GM10248 (cell line): ENCODE measurements at regions of chr6 and their contacts with region 1.

Region 1: DNA sequence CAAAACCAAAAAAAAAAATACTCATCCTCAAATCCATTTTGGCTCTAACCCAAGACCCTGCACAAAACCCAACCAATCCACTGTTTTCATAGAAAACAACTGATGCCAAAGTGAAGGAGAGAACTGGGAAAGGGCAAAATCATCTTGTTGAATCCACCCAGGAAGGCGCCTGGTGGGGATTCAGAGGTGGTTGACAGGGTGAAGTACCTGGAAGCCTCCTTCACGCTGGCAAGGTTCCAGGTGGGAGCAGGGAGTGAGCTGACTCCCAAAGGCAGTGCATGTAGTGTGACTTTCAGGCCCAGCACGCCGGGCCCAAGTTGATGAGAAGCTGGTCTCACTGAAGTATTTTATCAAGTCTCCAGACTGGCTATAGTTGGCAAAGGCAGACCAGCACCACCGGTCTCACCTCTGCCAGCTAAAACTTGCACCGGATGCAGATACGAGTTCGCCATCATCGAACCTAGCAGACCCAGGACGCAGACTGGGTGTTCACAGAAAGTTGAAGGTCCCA is 16.5 kb downstream of the PPP1R10 start:
- DNase-seq: no peak
- CTCF ChIP-seq: no peak

Region 2: DNA sequence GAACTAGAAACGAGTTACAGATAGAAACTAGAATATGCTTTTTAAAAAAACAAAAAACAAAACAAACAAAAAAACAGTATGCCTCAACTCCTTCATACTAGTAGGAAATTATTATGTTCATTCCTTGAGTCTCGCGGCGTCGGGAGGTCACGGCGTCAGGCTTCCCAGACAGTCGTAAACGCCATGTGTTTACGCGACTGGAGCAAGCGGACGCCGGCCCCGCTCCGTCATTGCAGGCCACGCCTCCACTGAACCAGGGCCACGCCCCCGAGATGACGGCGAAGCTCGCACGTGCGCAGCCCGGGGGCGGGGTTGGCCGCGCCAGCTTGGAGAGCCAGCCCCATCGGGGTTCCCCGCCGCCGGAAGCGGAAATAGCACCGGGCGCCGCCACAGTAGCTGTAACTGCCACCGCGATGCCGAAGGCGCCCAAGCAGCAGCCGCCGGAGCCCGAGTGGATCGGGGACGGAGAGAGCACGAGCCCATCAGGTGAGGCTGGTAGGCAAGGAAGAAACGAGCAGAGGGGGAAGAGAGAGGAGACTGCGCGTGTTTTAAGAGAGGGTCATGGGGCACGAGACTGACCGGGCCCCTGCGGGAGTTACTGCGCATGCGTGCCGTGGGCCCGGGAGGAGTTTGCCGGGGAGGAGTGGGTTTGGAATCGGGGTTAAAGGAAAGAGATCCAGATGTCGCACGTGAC is 29.3 kb before region 1 on chr6 and contains the start of gene ABCF1:
- CTCF ChIA-PET with region 1: interaction called, 12 read pairs
- POLR2A ChIA-PET with region 1: no interaction called
- DNase-seq: peak; percentile 99
- CTCF ChIP-seq: no peak

Region 3: GRCh38 chr6:30583921-30584320 is 16.6 kb before region 1 on chr6:
- CTCF ChIA-PET with region 1: interaction called, 62 read pairs
- POLR2A ChIA-PET with region 1: no interaction called
- DNase-seq: no peak
- CTCF ChIP-seq: no peak

Region 4: GRCh38 chr6:30935018-30935417 is 334.5 kb after region 1 on chr6:
- CTCF ChIA-PET with region 1: no interaction called
- POLR2A ChIA-PET with region 1: no interaction called
- DNase-seq: no peak
- CTCF ChIP-seq: no peak